ENCODE measurements at regions of chr18 and their contacts with region 1.

Region 1: DNA sequence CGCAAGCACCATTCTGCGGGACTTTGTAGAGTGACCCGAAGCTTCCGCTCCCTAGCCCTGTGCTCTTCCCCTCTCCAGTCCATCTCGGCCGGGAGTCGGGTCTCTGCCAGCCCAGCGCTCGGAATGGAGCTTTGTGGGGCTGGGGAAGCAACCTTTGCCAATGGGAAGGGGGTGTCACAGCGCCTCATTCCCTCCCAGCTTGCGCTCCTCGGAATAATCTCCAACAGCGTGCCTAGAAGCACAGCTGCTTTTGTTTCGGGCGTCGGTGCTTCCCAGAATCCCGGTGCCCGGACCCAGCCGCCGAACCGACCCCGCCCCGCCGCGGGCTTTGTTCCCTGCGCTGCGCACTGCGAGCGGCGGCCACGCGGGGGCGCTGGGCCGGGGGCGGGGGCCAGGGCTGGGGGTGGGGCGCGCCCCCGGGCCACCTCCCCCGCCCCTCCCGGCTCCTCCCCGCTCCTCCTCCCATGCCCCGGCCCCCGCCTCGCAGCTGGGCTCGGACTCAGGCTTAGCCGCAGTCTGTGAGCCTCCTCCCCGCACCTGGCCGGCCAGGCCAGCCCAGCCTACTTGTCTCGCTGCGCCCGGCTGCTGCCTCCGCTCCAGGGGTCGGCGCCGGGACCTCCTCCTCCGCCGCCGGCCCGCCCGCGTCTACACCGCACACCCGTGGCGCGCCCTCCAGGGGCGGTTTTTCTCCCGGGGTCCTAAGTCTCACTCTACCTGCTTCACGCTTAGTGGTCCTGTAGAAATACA is 77.7 kb upstream of the SMAD2 start:
- DNase-seq: peak; percentile 26
- H3K4me3 Mint-ChIP-seq: peak overlapping the region; percentile 49
- H3K27ac Mint-ChIP-seq: no peak overlapping the region
- H3K4me1 Mint-ChIP-seq: peaks cover 3% of the 10 kb centered on the region
- H3K27me3 Mint-ChIP-seq: peaks cover 33% of the 10 kb centered on the region

Region 2: GRCh38 chr18:47997338-47997780 is 10.8 kb before region 1 on chr18:
- CTCF ChIA-PET with region 1: interaction called, 15 read pairs
- intact Hi-C with region 1: no loop called
- DNase-seq: peak; percentile 56
- H3K4me3 Mint-ChIP-seq: no peak overlapping the region
- H3K27ac Mint-ChIP-seq: no peak overlapping the region
- H3K4me1 Mint-ChIP-seq: no peaks in the 10 kb centered on the region
- H3K27me3 Mint-ChIP-seq: no peaks in the 10 kb centered on the region